ENCODE measurements at regions of chr21 and their contacts with region 1.

Region 1: GRCh38 chr21:45357436-45358260 is 47.3 kb upstream of the COL18A1 start:
- DNase-seq: peak; percentile 83
- ATAC-seq: peak; percentile 73

Region 2: GRCh38 chr21:45309069-45309986 is 48.3 kb before region 1 on chr21:
- intact Hi-C with region 1: loop called (anchors 10 kb)
- DNase-seq: peak; percentile 85
- ATAC-seq: peak; percentile 54